ENCODE measurements at regions of chr12 and their contacts with region 1.

Region 1: DNA sequence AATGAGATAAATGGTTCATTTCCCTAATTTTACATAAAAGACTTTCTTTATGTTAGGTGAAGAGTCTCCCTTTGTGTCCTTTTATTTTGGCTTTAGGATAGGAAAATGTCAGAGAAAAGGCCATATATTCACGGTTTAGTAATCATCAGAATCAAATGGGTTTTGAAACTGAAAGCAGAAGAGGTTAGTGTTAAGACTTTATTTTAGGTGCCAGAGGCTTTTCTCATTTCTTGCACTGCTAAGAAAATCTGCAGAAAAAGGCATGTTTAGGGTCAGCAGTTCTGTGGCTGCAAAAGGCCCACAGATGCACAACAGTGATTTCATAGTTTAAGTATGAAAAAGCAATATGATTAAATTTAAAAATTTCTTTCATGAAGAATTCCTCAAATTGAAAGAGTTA is 80.4 kb upstream of the SINHCAF start:
- DNase-seq: no peak
- ATAC-seq: no peak
- H3K4me3 ChIP-seq: no peak overlapping the region
- H3K27ac ChIP-seq: peak overlapping the region in 1 of 2 experiments; percentile 22; a peak in 4 of 6 replicates
- H3K4me1 ChIP-seq: peaks cover 3% of the 10 kb centered on the region; the same call in 2 of the 3 replicates
- CTCF ChIP-seq: no peak
- EP300 ChIP-seq: no peak
- POLR2A ChIP-seq: no peak
- RAD21 ChIP-seq: no peak

Region 2: DNA sequence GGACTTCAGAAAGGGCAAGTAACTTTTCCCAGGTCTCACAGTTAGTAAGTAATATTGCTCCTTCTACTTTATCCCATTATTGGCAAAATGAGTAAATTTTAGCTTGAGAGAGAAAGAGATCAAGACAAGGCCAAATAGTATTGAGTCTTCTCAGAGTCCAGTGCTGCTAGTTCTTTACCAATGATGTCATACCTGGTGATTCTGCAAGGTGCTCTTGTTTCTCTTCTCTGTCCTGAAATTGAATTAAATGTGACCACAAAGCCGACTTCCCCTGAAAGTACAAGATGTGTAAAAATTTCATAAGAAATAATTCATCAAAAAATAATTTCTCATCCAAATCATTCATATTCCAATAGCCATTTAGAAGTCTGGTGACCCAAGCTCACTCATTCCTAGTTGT is 17.1 kb after region 1 on chr12:
- CTCF ChIA-PET with region 1: interaction called, 12 read pairs
- POLR2A ChIA-PET with region 1: no interaction called
- DNase-seq: no peak
- ATAC-seq: no peak
- H3K4me3 ChIP-seq: no peak overlapping the region
- H3K27ac ChIP-seq: no peak overlapping the region
- H3K4me1 ChIP-seq: no peaks in the 10 kb centered on the region
- CTCF ChIP-seq: no peak
- EP300 ChIP-seq: no peak
- POLR2A ChIP-seq: no peak
- RAD21 ChIP-seq: no peak

Region 3: GRCh38 chr12:31456562-31456961 is 50.2 kb after region 1 on chr12:
- CTCF ChIA-PET with region 1: interaction called, 23 read pairs
- POLR2A ChIA-PET with region 1: no interaction called
- DNase-seq: no peak
- ATAC-seq: no peak
- H3K4me3 ChIP-seq: no peak overlapping the region
- H3K27ac ChIP-seq: peak overlapping the region in 1 of 2 experiments; percentile 27; a peak in 2 of 6 replicates
- H3K4me1 ChIP-seq: 0 out of 3 replicates have a peak, but pooled peaks cover 3% of the 10 kb centered on the region
- CTCF ChIP-seq: no peak
- EP300 ChIP-seq: no peak
- POLR2A ChIP-seq: no peak
- RAD21 ChIP-seq: no peak

Region 4: GRCh38 chr12:31589904-31590641 is 183.7 kb after region 1 on chr12:
- CTCF ChIA-PET with region 1: interaction called, 21 read pairs
- POLR2A ChIA-PET with region 1: interaction called, 8 read pairs
- DNase-seq: peak; percentile 62 to 81
- ATAC-seq: peak; percentile 69 to 79
- H3K4me3 ChIP-seq: peak overlapping the region; percentile 60
- H3K27ac ChIP-seq: peak overlapping the region; percentile 86 to 97
- H3K4me1 ChIP-seq: peaks cover 36% of the 10 kb centered on the region
- CTCF ChIP-seq: peak; percentile 28; the same call in 2 of the 3 replicates
- EP300 ChIP-seq: no peak
- POLR2A ChIP-seq: no peak; the same call in 1 of the 2 replicates
- RAD21 ChIP-seq: peak; percentile 24 to 25; a peak in 1 of 5 replicates

Region 5: GRCh38 chr12:31631784-31632183 is 225.4 kb after region 1 on chr12:
- CTCF ChIA-PET with region 1: interaction called, 83 read pairs
- POLR2A ChIA-PET with region 1: no interaction called
- DNase-seq: no peak
- ATAC-seq: no peak
- H3K4me3 ChIP-seq: no peak overlapping the region
- H3K27ac ChIP-seq: no peak overlapping the region
- H3K4me1 ChIP-seq: peaks cover 7% of the 10 kb centered on the region
- CTCF ChIP-seq: no peak
- EP300 ChIP-seq: no peak
- POLR2A ChIP-seq: no peak
- RAD21 ChIP-seq: no peak

Region 6: GRCh38 chr12:31715283-31715825 is 309.0 kb after region 1 on chr12:
- CTCF ChIA-PET with region 1: no interaction called
- POLR2A ChIA-PET with region 1: no interaction called
- DNase-seq: peak in 1 of 2 experiments; percentile 24
- ATAC-seq: peak in 1 of 2 experiments; percentile 30; a peak in 1 of 6 replicates
- H3K4me3 ChIP-seq: no peak overlapping the region
- H3K27ac ChIP-seq: peak overlapping the region in 1 of 2 experiments; percentile 19; a peak in 2 of 6 replicates
- H3K4me1 ChIP-seq: no peaks in the 10 kb centered on the region
- CTCF ChIP-seq: no peak
- EP300 ChIP-seq: no peak
- POLR2A ChIP-seq: no peak
- RAD21 ChIP-seq: no peak

Measured in A549 (cell line).